ENCODE measurements at regions of chr2 and their contacts with region 1.

Region 1: GRCh38 chr2:53715568-53715967 is 52.0 kb upstream of the CHAC2 start:
- DNase-seq: no peak
- ATAC-seq: no peak

Region 2: DNA sequence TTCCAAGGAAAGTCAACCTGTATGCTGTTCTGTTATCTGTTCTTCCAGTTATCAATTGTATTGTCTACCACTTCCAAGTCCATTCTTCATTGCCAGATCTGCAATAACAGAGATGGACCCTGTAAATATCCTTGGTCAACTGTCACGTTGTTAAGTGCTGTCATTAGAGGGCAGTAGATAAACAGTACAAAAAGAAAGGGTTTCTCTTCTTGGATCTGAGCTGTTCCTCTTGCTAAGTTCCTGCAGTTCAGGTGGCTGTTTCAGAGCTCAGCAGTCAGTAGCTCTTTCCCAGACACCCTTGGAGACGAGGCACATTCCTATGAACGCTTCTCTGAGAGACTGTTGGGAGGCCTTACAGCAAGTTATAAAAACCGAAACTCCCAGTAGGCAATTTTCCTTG is 905.1 kb before region 1 on chr2:
- intact Hi-C with region 1: loop called in 1 of 2 experiments (anchors 10 kb)
- DNase-seq: no peak
- ATAC-seq: peak; percentile 56 to 73

Region 3: DNA sequence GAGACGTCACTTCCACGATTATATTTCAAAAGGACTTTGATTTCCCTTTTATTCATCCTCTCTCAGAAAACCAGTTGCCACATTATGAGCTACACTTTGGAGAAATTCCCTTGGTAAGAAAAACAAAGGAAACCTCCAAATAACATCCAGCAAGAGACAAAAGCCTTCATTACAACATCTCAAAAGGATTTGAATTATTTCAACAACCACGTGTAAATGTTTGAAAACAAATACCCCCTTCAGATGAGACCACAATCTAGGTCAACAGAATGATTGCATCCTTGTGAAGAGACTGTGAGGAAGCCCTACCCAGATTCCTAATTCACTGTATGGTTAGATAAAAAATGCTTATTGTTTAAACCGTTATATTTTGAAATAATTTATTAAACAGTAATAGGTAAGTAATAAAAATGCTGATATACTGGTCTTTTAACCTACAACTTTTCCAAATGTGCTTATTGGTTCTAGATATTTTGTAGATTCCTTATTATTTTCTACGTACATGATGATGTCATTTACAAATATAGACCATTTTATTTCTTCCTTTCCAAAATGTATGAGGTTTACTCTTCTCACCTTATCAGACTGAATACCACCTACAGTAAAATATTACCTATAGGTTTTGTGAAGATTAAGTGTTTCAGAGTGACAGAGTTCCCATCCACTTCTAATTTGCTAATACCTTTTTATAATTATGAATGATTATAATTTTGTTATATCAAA is 870.7 kb before region 1 on chr2:
- intact Hi-C with region 1: no loop called
- DNase-seq: no peak
- ATAC-seq: no peak

Region 4: DNA sequence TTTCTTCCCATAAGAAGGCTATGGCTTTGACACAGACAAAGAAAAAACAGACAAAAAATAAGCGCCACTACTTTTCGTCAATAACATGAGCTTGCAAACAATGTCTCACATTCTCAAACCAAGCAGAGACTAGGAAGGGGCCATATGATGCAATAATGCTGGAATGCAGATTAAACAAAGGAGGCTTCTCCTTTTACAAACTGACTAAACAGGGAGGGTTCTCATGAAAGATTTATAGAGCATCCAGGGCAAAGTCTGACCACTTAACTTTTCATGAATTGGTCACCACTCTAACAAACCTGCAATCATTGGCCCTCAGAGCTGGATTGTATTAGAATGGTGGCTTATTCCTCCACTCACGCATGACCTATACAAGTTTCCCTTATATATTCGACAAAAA is 611.3 kb before region 1 on chr2:
- intact Hi-C with region 1: loop called in 1 of 2 experiments (anchors 2 kb)
- DNase-seq: no peak
- ATAC-seq: no peak

Region 5: GRCh38 chr2:53515435-53516332 is 199.9 kb before region 1 on chr2:
- intact Hi-C with region 1: no loop called
- DNase-seq: no peak
- ATAC-seq: no peak

Region 6: DNA sequence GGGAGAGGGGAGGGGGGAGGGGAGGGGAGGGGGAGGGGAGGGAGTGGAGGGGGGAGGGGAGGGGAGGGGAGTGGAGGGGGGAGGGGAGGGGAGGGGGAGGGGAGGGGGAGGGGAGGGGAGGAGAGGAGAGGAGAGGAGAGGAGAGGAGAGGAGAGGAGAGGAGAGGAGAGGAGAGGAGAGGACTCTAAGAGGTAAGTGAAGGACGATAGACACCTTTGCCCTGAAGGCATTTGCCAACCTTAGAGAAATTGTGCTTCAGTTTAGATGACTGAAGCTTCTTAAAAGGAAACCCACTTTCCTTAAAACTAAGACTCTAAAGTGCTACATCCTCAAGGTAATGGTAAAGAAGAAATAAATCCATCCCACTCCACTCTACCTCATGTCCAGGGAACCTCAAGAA is 125.0 kb after region 1 on chr2:
- intact Hi-C with region 1: no loop called
- DNase-seq: no peak
- ATAC-seq: no peak

Measured in left cardiac atrium (tissue), 4 donors.